Body of pancreas (tissue), 4 donors: ENCODE measurements at regions of chr12 and their contacts with region 1.

Region 1: GRCh38 chr12:100554608-100555077 is 18.8 kb upstream of the GAS2L3 start:
- DNase-seq: peak in 3 of 4 donors; percentile 28 to 69 (median 38)
- ATAC-seq: peak; percentile 93
- H3K4me3 ChIP-seq: no peak overlapping the region
- H3K27ac ChIP-seq: no peak overlapping the region
- H3K4me1 ChIP-seq: peaks cover 12% of the 10 kb centered on the region
- H3K27me3 ChIP-seq: no peaks in the 10 kb centered on the region
- CTCF ChIP-seq: peak; percentile 76 to 99 (median 93)
- POLR2A ChIP-seq: no peak

Region 2: GRCh38 chr12:100234598-100235304 is 319.9 kb before region 1 on chr12:
- intact Hi-C with region 1: loop called (anchors 10 kb)
- DNase-seq: peak in 1 of 4 donors; percentile 22
- ATAC-seq: peak; percentile 58
- H3K4me3 ChIP-seq: no peak overlapping the region
- H3K27ac ChIP-seq: no peak overlapping the region
- H3K4me1 ChIP-seq: no peaks in the 10 kb centered on the region
- H3K27me3 ChIP-seq: no peaks in the 10 kb centered on the region
- CTCF ChIP-seq: peak; percentile 56 to 87 (median 81)
- POLR2A ChIP-seq: no peak

Region 3: GRCh38 chr12:100643246-100643645 is 88.6 kb after region 1 on chr12:
- intact Hi-C with region 1: no loop called
- DNase-seq: no peak
- ATAC-seq: no peak
- H3K4me3 ChIP-seq: no peak overlapping the region
- H3K27ac ChIP-seq: no peak overlapping the region
- H3K4me1 ChIP-seq: no peaks in the 10 kb centered on the region
- H3K27me3 ChIP-seq: no peaks in the 10 kb centered on the region
- CTCF ChIP-seq: no peak
- POLR2A ChIP-seq: no peak